A549 (cell line): ENCODE measurements at regions of chr11 and their contacts with region 1.

Region 1: GRCh38 chr11:32052218-32052617 is 38.7 kb upstream of the RCN1 start:
- DNase-seq: peak; percentile 38 to 51
- ATAC-seq: peak; percentile 73 to 85; a peak in 3 of 6 replicates
- H3K4me3 ChIP-seq: no peak overlapping the region
- H3K27ac ChIP-seq: no peak overlapping the region
- H3K4me1 ChIP-seq: no peaks in the 10 kb centered on the region
- CTCF ChIP-seq: peak; percentile 81
- EP300 ChIP-seq: no peak
- POLR2A ChIP-seq: no peak
- RAD21 ChIP-seq: peak; percentile 78 to 81

Region 2: GRCh38 chr11:32065865-32066264 is 13.6 kb after region 1 on chr11:
- CTCF ChIA-PET with region 1: interaction called, 24 read pairs
- POLR2A ChIA-PET with region 1: no interaction called
- DNase-seq: no peak
- ATAC-seq: no peak
- H3K4me3 ChIP-seq: no peak overlapping the region
- H3K27ac ChIP-seq: no peak overlapping the region
- H3K4me1 ChIP-seq: no peaks in the 10 kb centered on the region
- CTCF ChIP-seq: no peak
- EP300 ChIP-seq: no peak
- POLR2A ChIP-seq: no peak
- RAD21 ChIP-seq: no peak

Region 3: GRCh38 chr11:32072872-32073643 is 20.8 kb after region 1 on chr11:
- CTCF ChIA-PET with region 1: interaction called, 10 read pairs
- POLR2A ChIA-PET with region 1: no interaction called
- DNase-seq: no peak
- ATAC-seq: no peak
- H3K4me3 ChIP-seq: no peak overlapping the region
- H3K27ac ChIP-seq: no peak overlapping the region
- H3K4me1 ChIP-seq: no peaks in the 10 kb centered on the region
- CTCF ChIP-seq: no peak
- EP300 ChIP-seq: no peak
- POLR2A ChIP-seq: no peak
- RAD21 ChIP-seq: no peak